Head of caudate nucleus (tissue), 42 donors: ENCODE measurements at regions of chr5 and their contacts with region 1.

Region 1: GRCh38 chr5:143395638-143396352 is 7.7 kb downstream of the NR3C1 start:
- DNase-seq: no peak

Region 2: DNA sequence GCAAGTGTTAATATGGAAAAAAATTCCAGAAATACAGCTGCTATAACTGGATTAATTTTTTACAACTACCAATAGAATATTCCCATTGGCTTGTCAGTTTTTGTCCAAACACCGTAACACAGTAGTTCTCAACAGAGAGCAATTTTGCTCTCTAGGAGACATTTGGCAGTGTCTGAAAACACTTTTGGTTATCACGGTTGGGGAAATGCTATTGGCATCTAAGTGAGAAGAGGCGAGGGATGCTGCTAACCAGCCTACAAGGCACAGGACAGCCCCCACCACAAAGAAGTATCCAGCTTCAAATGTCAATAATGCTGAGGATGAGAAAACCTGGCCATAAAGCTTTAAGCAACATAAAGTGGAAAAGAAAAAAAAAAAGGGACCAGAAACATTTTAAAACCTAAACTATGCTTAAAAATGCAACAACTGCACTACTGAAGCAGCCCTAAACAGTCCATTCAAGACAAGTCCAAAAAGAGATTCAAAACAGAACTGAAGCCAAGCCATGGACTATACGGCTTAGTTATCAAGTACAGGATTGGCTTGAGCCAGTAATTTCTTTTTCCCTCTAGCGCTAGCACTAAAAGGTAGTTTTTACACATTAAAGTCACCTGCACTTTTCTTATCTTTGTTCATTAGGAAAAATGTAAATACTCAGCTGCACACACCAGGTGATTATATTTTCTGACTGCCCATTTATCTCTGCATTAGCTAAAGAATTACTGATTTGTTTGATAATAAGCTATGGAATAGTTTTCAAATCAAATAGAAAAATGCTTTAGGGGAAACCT is 76.2 kb before region 1 on chr5:
- intact Hi-C with region 1: loop called (anchors 10 kb)
- DNase-seq: no peak